Sciatic nerve (tissue), 2 donors: ENCODE measurements at regions of chr6 and their contacts with region 1.

Region 1: GRCh38 chr6:47309291-47310130 is at the start of gene TNFRSF21:
- DNase-seq: peak; percentile 91
- ATAC-seq: peak; percentile 99
- total RNA-seq, gene TNFRSF21: 6.3 TPM

Region 2: DNA sequence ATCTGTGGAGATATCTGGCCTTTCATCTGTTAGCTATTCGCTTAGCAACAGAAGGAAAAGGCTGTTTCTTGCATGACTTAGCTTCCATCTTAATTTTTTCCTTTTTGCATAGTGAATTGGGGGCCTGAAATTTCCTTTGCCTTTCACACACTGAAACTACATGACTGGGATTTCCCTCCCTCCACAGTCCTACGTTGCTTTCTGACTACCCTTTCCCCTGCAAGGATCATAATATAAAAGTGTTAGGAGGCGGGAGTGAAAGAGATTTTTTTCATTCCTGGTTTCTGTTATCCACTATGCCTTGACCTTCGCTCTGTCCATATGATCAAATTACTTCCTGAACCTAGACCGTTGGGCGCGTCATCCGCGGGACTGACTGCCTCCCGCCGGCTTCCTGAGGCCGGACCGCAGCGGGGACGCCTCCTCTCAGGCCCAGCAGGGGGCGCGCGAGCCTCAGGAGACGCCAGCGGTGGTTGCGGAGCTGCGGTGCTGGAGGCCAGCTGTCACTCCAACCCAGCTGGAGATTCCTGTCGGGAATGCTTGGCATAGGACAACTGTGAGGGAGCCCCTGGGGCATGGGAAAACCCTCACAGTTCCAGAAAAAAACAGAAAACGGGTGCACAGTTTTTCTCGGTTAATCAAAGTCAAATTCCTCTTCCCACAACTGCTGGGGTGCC is 460.7 kb before region 1 on chr6:
- intact Hi-C with region 1: loop called (anchors 10 kb)
- DNase-seq: peak; percentile 90
- ATAC-seq: peak; percentile 96

Region 3: GRCh38 chr6:47083586-47084047 is 225.9 kb before region 1 on chr6:
- intact Hi-C with region 1: no loop called
- DNase-seq: peak; percentile 81
- ATAC-seq: peak; percentile 96

Region 4: DNA sequence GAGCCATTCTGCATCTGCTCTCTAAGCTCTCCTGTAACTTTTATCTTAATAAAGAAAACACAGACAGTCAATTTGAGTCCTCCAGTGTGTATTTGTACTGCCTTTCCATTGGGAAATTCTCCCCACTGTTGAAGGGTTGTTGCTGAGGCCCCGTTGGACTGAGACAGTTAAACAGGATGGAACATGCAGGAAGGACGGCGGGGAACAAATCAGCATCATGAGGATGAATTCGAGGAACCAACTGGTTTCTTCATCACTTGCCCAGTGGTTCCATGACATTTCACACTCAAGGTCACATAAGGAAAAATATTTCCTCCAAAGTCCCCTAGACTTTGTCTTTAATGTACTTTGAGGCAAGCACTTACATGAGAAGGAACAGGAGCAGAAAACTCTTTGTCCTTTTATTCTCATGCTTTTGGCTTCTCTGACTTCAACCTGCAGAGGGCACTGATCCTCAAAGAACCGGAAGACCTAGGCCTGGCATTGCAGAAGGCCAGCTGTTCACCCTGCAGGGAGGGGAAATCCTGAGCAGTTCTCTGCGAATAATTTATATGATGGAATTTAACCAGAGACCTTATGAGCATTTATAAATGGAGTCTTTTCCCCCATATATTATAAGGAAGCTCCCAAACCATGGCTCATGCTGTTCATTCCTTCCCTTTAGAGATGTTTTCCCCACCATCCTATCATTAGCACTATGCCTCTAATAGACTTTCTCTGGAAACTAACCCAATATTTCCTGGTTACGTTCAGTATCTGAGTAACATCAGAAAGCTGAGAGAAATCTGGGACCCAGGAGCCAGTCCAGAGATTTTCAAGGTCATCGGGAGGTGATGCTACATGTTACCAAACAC is 212.2 kb before region 1 on chr6:
- intact Hi-C with region 1: loop called (anchors 10 kb)
- DNase-seq: no peak
- ATAC-seq: peak; percentile 88